ENCODE measurements at regions of chr11 and their contacts with region 1.

Region 1: GRCh38 chr11:42770444-42771065 is 541.2 kb upstream of the API5 start:
- DNase-seq: no peak
- ATAC-seq: peak; percentile 90
- H3K4me3 ChIP-seq: no peak overlapping the region
- H3K27ac ChIP-seq: no peak overlapping the region
- H3K4me1 ChIP-seq: no peaks in the 10 kb centered on the region
- H3K27me3 ChIP-seq: no peaks in the 10 kb centered on the region
- CTCF ChIP-seq: peak; percentile 69 to 77 (median 72)
- EP300 ChIP-seq: no peak
- POLR2A ChIP-seq: no peak
- RAD21 ChIP-seq: peak; percentile 77

Region 2: GRCh38 chr11:42720716-42721563 is 49.6 kb before region 1 on chr11:
- CTCF ChIA-PET with region 1: no interaction called
- POLR2A ChIA-PET with region 1: no interaction called
- RAD21 ChIA-PET with region 1: no interaction called
- SMC1A ChIA-PET with region 1: no interaction called
- in situ Hi-C with region 1: no loop called
- intact Hi-C with region 1: no loop called
- DNase-seq: no peak
- ATAC-seq: no peak
- H3K4me3 ChIP-seq: no peak overlapping the region
- H3K27ac ChIP-seq: no peak overlapping the region
- H3K4me1 ChIP-seq: no peaks in the 10 kb centered on the region
- H3K27me3 ChIP-seq: no peaks in the 10 kb centered on the region
- CTCF ChIP-seq: no peak
- EP300 ChIP-seq: no peak
- POLR2A ChIP-seq: no peak
- RAD21 ChIP-seq: no peak

Region 3: GRCh38 chr11:43021466-43021865 is 250.9 kb after region 1 on chr11:
- CTCF ChIA-PET with region 1: interaction called, 52 read pairs
- POLR2A ChIA-PET with region 1: no interaction called
- RAD21 ChIA-PET with region 1: interaction called, 6 read pairs
- SMC1A ChIA-PET with region 1: interaction called, 13 read pairs
- in situ Hi-C with region 1: no loop called
- intact Hi-C with region 1: loop called (anchors 1 kb)
- DNase-seq: no peak
- ATAC-seq: peak; percentile 96
- H3K4me3 ChIP-seq: no peak overlapping the region
- H3K27ac ChIP-seq: no peak overlapping the region
- H3K4me1 ChIP-seq: no peaks in the 10 kb centered on the region
- H3K27me3 ChIP-seq: no peaks in the 10 kb centered on the region
- CTCF ChIP-seq: peak; percentile 31 to 55 (median 48); a peak in 3 of 6 replicates
- EP300 ChIP-seq: no peak
- POLR2A ChIP-seq: no peak
- RAD21 ChIP-seq: peak; percentile 28; the same call in 1 of the 2 replicates

Region 4: DNA sequence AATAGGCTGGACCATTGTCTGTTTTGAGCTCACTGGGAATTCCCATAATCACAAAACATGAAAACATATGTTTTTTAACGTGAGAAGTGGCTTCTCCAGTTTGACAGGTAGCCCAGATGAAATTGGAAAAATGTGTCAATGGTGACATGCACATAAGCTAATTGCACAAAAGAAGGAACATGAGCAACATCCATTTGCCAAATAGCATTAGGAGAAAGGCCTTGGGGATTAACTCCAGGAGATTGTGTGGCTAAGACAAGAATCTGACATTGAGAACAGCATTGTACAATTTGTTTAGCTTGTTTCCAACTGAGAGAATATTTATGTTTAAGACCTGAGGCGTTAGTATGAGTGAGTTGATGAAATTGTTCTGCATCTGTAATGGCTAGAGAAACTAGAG is 394.3 kb after region 1 on chr11:
- CTCF ChIA-PET with region 1: no interaction called
- POLR2A ChIA-PET with region 1: no interaction called
- RAD21 ChIA-PET with region 1: no interaction called
- SMC1A ChIA-PET with region 1: no interaction called
- in situ Hi-C with region 1: no loop called
- intact Hi-C with region 1: loop called (anchors 10 kb)
- DNase-seq: no peak
- ATAC-seq: no peak
- H3K4me3 ChIP-seq: no peak overlapping the region
- H3K27ac ChIP-seq: no peak overlapping the region
- H3K4me1 ChIP-seq: no peaks in the 10 kb centered on the region
- H3K27me3 ChIP-seq: no peaks in the 10 kb centered on the region
- CTCF ChIP-seq: no peak
- EP300 ChIP-seq: no peak
- POLR2A ChIP-seq: no peak
- RAD21 ChIP-seq: no peak

Measured in GM12878 (cell line).